ENCODE measurements at regions of chr12 and their contacts with region 1.

Region 1: DNA sequence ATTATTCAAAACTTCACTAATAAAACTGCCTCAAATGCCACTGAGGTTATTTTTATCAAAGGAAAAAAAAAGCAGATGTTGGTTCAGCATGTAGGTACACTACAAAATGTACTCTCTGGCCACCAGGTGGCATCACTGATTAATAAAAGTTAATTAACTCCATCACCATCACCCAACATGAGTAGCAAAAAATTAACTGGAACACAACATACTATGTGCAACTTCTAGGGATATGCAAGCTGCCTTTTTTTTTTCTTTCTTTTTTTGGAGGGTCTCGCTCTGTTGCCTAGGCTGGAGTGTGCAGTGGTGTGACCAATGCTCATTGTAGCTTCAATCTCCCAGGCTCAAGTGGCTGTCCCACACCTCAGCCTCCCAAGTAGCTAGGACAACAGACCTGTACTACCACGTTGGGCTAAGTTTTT is 43.8 kb upstream of the NR2C1 start:
- H3K4me3 ChIP-seq: no peak overlapping the region
- H3K27ac ChIP-seq: no peak overlapping the region
- H3K4me1 ChIP-seq: no peaks in the 10 kb centered on the region
- CTCF ChIP-seq: peak; percentile 53

Region 2: DNA sequence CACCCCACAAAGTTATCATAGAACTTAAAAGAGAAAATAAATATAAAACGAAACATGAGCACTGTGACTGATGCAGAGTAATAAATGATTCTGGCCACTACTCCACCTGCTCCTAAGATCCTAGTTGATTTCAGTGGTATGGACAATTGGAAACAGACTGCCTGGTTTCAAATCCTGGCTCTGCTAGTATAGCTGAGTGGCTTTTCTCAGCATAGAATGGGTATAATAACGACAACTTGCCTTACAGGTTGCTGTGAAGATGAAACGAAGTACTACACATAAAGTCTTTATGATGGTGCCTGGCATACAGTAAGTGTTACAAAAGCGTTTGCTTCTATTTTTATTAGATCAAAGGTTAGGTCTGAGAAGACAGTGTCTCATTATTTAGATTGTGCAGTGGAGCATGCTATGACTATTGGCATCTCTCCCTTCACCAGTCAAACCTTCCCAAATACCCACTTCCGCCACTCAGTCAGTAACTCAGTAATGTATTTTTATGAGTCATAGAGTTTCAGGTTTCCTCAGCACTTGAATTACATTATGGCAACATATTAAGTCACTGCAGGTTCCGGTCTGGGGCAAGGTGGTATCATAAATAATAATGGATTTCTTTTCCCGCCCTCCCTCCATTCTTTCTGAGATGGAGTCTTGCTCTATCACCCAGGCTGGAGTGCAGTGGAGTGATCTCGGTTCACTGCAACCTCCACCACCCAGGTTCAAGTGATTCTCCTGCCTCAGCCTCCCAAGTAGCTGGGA is 14.1 kb before region 1 on chr12:
- CTCF ChIA-PET with region 1: interaction called, 10 read pairs
- POLR2A ChIA-PET with region 1: no interaction called
- H3K4me3 ChIP-seq: no peak overlapping the region; the same call in 1 of the 2 replicates
- H3K27ac ChIP-seq: peak overlapping the region; percentile 63
- H3K4me1 ChIP-seq: peaks cover 9% of the 10 kb centered on the region
- CTCF ChIP-seq: no peak

Region 3: GRCh38 chr12:95182868-95183415 is 65.8 kb after region 1 on chr12:
- CTCF ChIA-PET with region 1: no interaction called
- POLR2A ChIA-PET with region 1: no interaction called
- H3K4me3 ChIP-seq: no peak overlapping the region
- H3K27ac ChIP-seq: no peak overlapping the region
- H3K4me1 ChIP-seq: peaks cover 5% of the 10 kb centered on the region; the same call in 1 of the 2 replicates
- CTCF ChIP-seq: no peak

Region 4: GRCh38 chr12:95538656-95539055 is 421.5 kb after region 1 on chr12:
- CTCF ChIA-PET with region 1: interaction called, 54 read pairs
- POLR2A ChIA-PET with region 1: interaction called, 4 read pairs
- H3K4me3 ChIP-seq: no peak overlapping the region
- H3K27ac ChIP-seq: no peak overlapping the region
- H3K4me1 ChIP-seq: 0 out of 2 replicates have a peak, but pooled peaks cover 4% of the 10 kb centered on the region
- CTCF ChIP-seq: no peak

Measured in HEK293 (cell line).